Activated CD4-positive, alpha-beta T cell treated with anti-CD3 and anti-CD28 coated beads, Interleukin-2, amount 10 ng/mL, durations not matched to agents 24 days and 14 days (primary cell): ENCODE measurements at regions of chr18 and their contacts with region 1.

Region 1: DNA sequence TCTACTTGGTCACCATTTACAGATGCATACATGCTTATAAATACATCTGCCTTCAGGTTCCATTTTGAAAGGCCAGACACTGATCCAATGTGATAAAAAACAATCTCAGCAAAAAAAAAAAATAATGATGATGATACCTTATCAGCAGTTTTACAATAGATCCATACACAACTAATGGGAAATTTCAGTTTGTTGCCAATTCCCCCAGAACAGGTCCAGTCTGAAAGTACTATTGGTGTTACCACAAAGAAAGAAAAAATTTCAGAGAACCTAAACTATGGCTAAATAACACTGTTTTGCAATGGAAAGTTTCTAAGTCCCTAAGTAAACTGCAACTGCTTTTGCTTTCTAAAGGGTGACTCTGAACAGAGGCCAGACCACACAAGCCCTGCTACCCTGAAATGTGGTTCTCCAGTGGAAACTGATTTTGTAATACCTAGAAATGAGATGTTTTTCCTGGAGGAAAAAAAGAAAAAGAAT is 54.1 kb downstream of the LPIN2 start:
- DNase-seq: peak; percentile 87
- H3K4me3 Mint-ChIP-seq: peak overlapping the region; percentile 82
- H3K27ac Mint-ChIP-seq: peak overlapping the region; percentile 99
- H3K4me1 Mint-ChIP-seq: peaks cover 78% of the 10 kb centered on the region
- H3K27me3 Mint-ChIP-seq: no peaks in the 10 kb centered on the region

Region 2: GRCh38 chr18:2641638-2642037 is 317.2 kb before region 1 on chr18:
- intact Hi-C with region 1: loop called (anchors 5 kb)
- DNase-seq: peak; percentile 75
- H3K4me3 Mint-ChIP-seq: peak overlapping the region; percentile 70
- H3K27ac Mint-ChIP-seq: peak overlapping the region; percentile 87
- H3K4me1 Mint-ChIP-seq: peaks cover 43% of the 10 kb centered on the region
- H3K27me3 Mint-ChIP-seq: no peaks in the 10 kb centered on the region

Region 3: GRCh38 chr18:2672410-2672809 is 286.4 kb before region 1 on chr18:
- intact Hi-C with region 1: no loop called
- DNase-seq: no peak
- H3K4me3 Mint-ChIP-seq: no peak overlapping the region
- H3K27ac Mint-ChIP-seq: no peak overlapping the region
- H3K4me1 Mint-ChIP-seq: peaks cover 43% of the 10 kb centered on the region
- H3K27me3 Mint-ChIP-seq: no peaks in the 10 kb centered on the region

Region 4: DNA sequence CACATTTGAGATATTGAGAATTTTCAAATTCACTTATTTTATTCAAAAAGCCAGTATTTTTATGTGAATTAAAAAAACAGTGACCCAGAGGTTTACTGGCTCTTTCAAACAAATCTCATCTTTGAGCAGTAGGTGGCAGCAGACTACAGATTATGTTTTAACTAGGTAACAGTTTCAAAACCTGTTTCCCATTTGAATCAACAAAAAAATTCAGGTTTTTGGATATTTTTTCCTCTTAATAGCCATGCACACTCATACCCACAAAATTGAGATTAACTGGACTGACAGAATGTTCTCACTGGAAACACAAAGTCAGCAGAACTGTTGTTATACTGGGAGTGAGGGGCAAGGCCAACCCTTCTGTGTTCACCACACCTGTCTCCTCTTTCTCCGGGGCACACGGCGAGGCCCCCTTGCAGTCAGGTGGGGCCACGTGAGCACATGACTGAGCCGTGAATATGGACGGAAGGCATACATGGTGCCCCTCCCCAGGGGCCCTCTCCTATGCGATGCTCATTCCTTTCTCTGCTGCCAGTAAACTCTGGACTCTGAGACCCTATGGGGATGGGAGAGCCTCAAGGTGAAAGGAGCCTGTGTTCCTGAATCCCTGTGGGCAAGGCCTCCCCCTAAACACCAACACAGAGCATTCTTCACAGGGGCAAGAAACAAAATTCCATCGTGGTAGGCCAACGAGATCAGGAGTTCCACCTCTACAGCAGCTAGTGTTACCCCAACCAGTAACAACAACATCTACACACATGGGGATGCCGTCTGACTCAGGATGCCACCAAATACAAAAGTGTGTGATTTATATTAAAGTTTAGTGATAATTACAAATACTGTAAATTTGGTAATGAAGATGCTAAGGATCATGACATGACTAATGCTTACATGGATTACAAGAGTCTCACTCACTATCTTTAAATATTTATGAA is 26.3 kb before region 1 on chr18:
- intact Hi-C with region 1: loop called (anchors 1 kb)
- DNase-seq: peak; percentile 88
- H3K4me3 Mint-ChIP-seq: peak overlapping the region; percentile 6
- H3K27ac Mint-ChIP-seq: peak overlapping the region; percentile 92
- H3K4me1 Mint-ChIP-seq: peaks cover 35% of the 10 kb centered on the region
- H3K27me3 Mint-ChIP-seq: no peaks in the 10 kb centered on the region

Region 5: DNA sequence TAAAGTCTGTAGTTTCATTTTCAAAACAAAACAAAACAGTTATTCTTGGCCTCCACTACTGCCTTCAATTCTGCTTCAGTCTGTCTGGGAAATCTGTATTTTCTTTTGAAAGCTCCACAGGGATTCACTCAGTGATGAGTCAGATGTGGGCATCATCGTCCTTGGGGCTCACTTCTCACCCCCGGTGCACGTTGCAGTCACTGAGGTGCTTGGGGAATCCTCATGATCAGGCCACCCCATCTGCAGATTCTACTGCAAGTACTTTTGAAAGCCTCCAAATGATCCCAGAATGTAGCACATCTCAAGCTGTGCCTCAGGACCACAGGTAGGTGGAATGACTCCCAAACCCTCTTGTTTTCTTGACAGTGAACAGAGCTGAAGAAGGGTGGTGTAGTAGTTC is 19.8 kb after region 1 on chr18:
- intact Hi-C with region 1: loop called (anchors 1 kb)
- DNase-seq: peak; percentile 76
- H3K4me3 Mint-ChIP-seq: peak overlapping the region; percentile 81
- H3K27ac Mint-ChIP-seq: peak overlapping the region; percentile 93
- H3K4me1 Mint-ChIP-seq: peaks cover 73% of the 10 kb centered on the region
- H3K27me3 Mint-ChIP-seq: no peaks in the 10 kb centered on the region

Region 6: DNA sequence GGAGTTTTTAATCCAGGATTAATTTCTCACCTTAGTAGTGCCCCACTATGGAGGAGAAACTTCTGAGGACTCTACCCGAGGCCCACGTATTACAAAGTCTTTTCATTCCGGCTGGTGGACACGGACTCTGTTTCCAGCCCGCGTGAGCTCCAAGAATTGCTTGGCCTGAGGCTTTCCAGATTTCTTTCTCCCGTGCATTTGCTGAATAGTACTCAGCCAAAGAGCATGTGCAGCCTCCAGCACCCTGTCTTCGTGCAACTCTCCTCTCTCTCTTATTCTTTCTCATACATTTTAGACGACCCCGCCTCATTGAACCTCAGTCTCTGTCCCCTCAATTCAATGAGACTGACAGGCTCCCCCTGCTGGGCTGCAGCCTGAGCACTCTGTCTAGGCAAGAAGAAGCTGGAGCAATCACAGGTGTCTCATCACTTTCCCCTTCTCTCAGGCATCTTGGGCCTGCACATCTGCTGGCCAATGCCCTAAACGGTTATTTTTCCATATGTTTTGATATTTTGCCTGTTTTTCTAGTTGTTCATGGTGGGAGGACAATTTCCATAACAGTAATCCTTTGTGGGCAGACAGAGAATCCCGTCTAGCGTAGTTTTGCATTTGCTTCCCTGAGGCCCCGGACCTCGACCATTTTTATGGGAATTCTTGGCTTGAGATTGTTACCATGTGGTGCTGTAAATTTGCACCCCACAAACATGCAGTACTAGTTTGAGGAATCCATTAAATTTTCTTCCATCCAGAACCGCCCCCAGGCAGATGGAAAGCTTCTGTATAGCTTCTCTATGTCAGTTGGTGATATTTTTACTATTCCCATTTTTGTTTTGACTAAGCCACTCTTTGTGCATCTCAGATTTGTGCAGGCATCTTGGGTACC is 104.2 kb after region 1 on chr18:
- intact Hi-C with region 1: loop called (anchors 1 kb)
- DNase-seq: peak; percentile 93
- H3K4me3 Mint-ChIP-seq: peak overlapping the region; percentile 62
- H3K27ac Mint-ChIP-seq: peak overlapping the region; percentile 79
- H3K4me1 Mint-ChIP-seq: peaks cover 66% of the 10 kb centered on the region
- H3K27me3 Mint-ChIP-seq: no peaks in the 10 kb centered on the region